H1 (cell line): ENCODE measurements at regions of chr17 and their contacts with region 1.

Region 1: GRCh38 chr17:73311781-73312641 is at the start of gene CDC42EP4:
- DNase-seq: peak in 1 of 2 experiments; percentile 96
- H3K4me3 ChIP-seq: peak within 1 kb of the TSS; percentile 78 to 92 (median 82)
- H3K27ac ChIP-seq: no peak within 1 kb of the TSS
- H3K4me1 ChIP-seq: peaks cover 2 to 24% (median 20%) of the 10 kb centered on the region in 4 experiments
- H3K27me3 ChIP-seq: peaks cover 0 to 10% (median 5%) of the 10 kb centered on the region in 4 experiments; a peak in 3 of 7 replicates
- CTCF ChIP-seq: no peak
- EP300 ChIP-seq: no peak
- POLR2A ChIP-seq: no peak
- RAD21 ChIP-seq: no peak
- total RNA-seq, gene CDC42EP4: 12.6 and 13.1 TPM in 2 replicates

Region 2: GRCh38 chr17:73083432-73083831 is 228.6 kb before region 1 on chr17:
- CTCF ChIA-PET with region 1: no interaction called
- POLR2A ChIA-PET with region 1: no interaction called
- DNase-seq: no peak
- H3K4me3 ChIP-seq: no peak overlapping the region
- H3K27ac ChIP-seq: no peak overlapping the region
- H3K4me1 ChIP-seq: no peaks in the 10 kb centered on the region
- H3K27me3 ChIP-seq: no peaks in the 10 kb centered on the region
- CTCF ChIP-seq: no peak
- EP300 ChIP-seq: no peak
- POLR2A ChIP-seq: no peak
- RAD21 ChIP-seq: no peak

Region 3: GRCh38 chr17:73142872-73143381 is 169.1 kb before region 1 on chr17:
- CTCF ChIA-PET with region 1: no interaction called
- POLR2A ChIA-PET with region 1: no interaction called
- DNase-seq: no peak
- H3K4me3 ChIP-seq: no peak overlapping the region
- H3K27ac ChIP-seq: no peak overlapping the region
- H3K4me1 ChIP-seq: no peaks in the 10 kb centered on the region
- H3K27me3 ChIP-seq: no peaks in the 10 kb centered on the region
- CTCF ChIP-seq: no peak
- EP300 ChIP-seq: no peak
- POLR2A ChIP-seq: no peak
- RAD21 ChIP-seq: no peak

Region 4: GRCh38 chr17:73255671-73256181 is 56.3 kb before region 1 on chr17:
- CTCF ChIA-PET with region 1: interaction called, 53 read pairs
- POLR2A ChIA-PET with region 1: interaction called, 6 read pairs
- DNase-seq: peak; percentile 46 to 93
- H3K4me3 ChIP-seq: no peak overlapping the region
- H3K27ac ChIP-seq: no peak overlapping the region
- H3K4me1 ChIP-seq: peaks cover 0 to 8% (median 4%) of the 10 kb centered on the region in 4 experiments; a peak in 3 of 7 replicates
- H3K27me3 ChIP-seq: peaks cover 0 to under 1% (median 0%) of the 10 kb centered on the region in 4 experiments; a peak in 1 of 7 replicates
- CTCF ChIP-seq: peak; percentile 94 to 99 (median 98)
- EP300 ChIP-seq: no peak; a peak in 1 of 3 replicates
- POLR2A ChIP-seq: no peak
- RAD21 ChIP-seq: peak; percentile 99 to 100

Region 5: DNA sequence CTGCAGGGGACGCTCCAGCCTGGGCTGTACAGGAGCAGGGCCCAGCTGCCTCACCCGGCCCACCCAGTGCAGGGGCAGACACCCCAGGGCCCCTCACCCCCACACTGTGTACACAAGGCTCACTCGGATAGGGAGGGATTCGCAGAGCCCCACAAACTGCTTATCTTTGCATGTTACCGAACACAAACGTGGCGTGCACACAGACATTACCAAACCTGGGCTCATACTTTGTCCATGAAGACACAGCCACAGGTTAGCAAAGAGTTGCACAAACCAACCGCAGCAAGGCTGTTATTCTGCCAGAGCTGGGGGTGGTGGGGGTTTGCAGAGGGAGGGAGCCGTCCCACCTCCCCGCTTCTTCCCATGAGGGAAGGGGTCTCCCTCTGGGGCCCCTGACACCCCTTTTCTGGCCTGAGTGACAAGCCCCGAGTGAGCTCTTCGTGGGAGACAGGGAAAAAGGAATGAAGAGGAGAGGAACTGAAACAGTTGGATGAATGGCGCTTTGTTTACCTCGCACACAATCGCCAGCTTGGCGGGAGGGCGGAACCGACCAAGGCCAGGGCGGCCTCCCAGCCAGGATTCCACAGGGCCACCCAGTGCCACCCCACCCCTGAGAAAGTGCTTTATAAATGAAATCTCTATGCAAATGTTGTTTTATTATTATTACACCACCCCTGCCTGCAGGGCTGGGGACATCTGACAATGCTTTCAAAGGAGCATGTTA is 49.9 kb before region 1 on chr17:
- CTCF ChIA-PET with region 1: interaction called, 12 read pairs
- POLR2A ChIA-PET with region 1: no interaction called
- DNase-seq: peak; percentile 19 to 63
- H3K4me3 ChIP-seq: peak overlapping the region in 1 of 4 experiments; percentile 25; a peak in 1 of 8 replicates
- H3K27ac ChIP-seq: 0 out of 2 replicates have a peak overlapping the region, but pooled peaks have one; percentile 3
- H3K4me1 ChIP-seq: peaks cover 5 to 18% (median 11%) of the 10 kb centered on the region in 4 experiments
- H3K27me3 ChIP-seq: peaks cover 0 to 10% (median 4%) of the 10 kb centered on the region in 4 experiments; a peak in 4 of 7 replicates
- CTCF ChIP-seq: no peak
- EP300 ChIP-seq: 0 out of 3 replicates have a peak, but pooled peaks of 1 of the 2 experiments have one; percentile 26
- POLR2A ChIP-seq: no peak
- RAD21 ChIP-seq: no peak

Region 6: GRCh38 chr17:73297934-73298861 is 13.8 kb before region 1 on chr17:
- CTCF ChIA-PET with region 1: interaction called, 39 read pairs
- POLR2A ChIA-PET with region 1: interaction called, 6 read pairs
- DNase-seq: no peak
- H3K4me3 ChIP-seq: no peak overlapping the region
- H3K27ac ChIP-seq: no peak overlapping the region
- H3K4me1 ChIP-seq: no peaks in the 10 kb centered on the region
- H3K27me3 ChIP-seq: no peaks in the 10 kb centered on the region
- CTCF ChIP-seq: no peak
- EP300 ChIP-seq: no peak
- POLR2A ChIP-seq: no peak
- RAD21 ChIP-seq: no peak

Region 7: DNA sequence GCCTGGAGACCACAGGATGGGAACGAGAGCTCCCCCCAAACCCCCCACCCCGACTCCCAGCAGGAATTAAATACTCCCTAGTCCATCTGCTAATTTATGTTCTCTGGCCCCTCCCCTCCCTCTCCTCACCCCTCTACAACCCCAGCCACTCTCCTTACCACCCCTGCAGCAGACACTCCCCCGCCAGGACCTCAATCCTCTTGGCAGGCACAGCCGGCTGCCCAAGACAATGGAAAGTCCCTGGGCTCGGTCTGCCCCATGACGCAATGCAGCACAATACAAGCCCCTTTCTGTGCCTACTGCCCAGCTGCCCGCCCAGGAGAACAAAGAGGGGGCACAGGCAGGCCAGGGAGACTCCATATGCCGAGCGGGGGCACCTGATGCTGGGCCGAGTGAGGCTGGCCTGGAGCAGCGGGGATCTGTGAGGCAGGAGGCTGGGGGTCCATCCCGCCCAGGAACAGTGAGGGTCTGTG is 30.1 kb after region 1 on chr17:
- CTCF ChIA-PET with region 1: interaction called, 53 read pairs
- POLR2A ChIA-PET with region 1: interaction called, 49 read pairs
- DNase-seq: peak; percentile 70 to 78
- H3K4me3 ChIP-seq: peak overlapping the region in 2 of 4 experiments; percentile 14 to 17; a peak in 3 of 8 replicates
- H3K27ac ChIP-seq: peak overlapping the region; percentile 82
- H3K4me1 ChIP-seq: peaks cover 10 to 33% (median 27%) of the 10 kb centered on the region in 4 experiments
- H3K27me3 ChIP-seq: no peaks in the 10 kb centered on the region
- CTCF ChIP-seq: no peak
- EP300 ChIP-seq: peak in 1 of 2 experiments; percentile 86; a peak in 1 of 3 replicates
- POLR2A ChIP-seq: peak in 1 of 2 experiments; percentile 46; a peak in 1 of 3 replicates
- RAD21 ChIP-seq: peak in 1 of 2 experiments; percentile 12; a peak in 1 of 4 replicates

Region 8: DNA sequence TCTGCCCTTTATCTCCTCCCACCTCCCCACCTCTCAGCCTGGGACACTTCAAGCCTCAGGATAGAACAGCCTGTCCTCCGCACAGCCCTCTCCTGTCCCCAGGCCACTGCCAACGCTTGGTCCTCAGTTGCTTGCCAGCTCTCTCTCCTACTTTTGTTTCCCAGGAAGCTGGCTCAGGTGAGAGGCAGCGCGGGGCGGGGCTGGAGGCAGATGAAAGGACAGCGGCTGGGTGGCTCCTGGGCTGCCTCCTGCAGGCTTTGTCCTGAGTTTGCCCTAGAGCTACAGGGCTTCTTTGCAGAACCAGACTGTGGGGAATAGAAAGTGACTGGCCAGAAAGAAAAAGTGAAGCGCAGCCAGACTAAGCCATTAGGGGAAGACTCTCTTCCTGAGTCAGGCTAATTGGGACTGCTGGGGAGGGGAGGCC is 48.0 kb after region 1 on chr17:
- CTCF ChIA-PET with region 1: interaction called, 18 read pairs
- POLR2A ChIA-PET with region 1: interaction called, 5 read pairs
- DNase-seq: peak; percentile 59 to 81
- H3K4me3 ChIP-seq: peak overlapping the region in 1 of 4 experiments; percentile 34; a peak in 3 of 8 replicates
- H3K27ac ChIP-seq: no peak overlapping the region
- H3K4me1 ChIP-seq: peaks cover 4 to 33% (median 26%) of the 10 kb centered on the region in 4 experiments
- H3K27me3 ChIP-seq: no peaks in the 10 kb centered on the region
- CTCF ChIP-seq: peak; percentile 33 to 42 (median 34)
- EP300 ChIP-seq: no peak
- POLR2A ChIP-seq: no peak
- RAD21 ChIP-seq: peak; percentile 23 to 58; a peak in 3 of 4 replicates

Region 9: DNA sequence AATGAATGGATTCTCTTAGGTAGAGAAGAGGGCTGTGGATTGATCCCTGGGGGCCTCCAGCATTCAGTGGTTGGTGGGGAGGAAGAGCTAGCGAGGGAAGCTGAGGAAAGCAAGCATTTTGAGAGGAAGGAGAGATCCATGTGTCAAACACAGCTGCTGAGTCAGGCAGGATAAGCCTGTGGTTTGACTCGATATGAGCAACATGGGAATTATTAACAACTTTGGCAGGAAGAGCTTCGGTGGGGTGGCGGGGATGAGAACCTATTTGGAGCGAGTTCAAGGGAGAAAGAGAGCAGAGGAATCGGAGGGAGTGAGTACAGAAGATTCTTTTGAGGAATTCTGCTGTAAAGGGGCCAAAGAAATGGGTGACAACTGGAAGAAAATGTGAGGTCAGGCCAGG is 59.3 kb after region 1 on chr17:
- CTCF ChIA-PET with region 1: interaction called, 52 read pairs
- POLR2A ChIA-PET with region 1: no interaction called
- DNase-seq: no peak
- H3K4me3 ChIP-seq: no peak overlapping the region
- H3K27ac ChIP-seq: no peak overlapping the region
- H3K4me1 ChIP-seq: peaks cover 0 to 7% (median 2%) of the 10 kb centered on the region in 4 experiments; a peak in 4 of 7 replicates
- H3K27me3 ChIP-seq: no peaks in the 10 kb centered on the region
- CTCF ChIP-seq: no peak
- EP300 ChIP-seq: no peak
- POLR2A ChIP-seq: no peak
- RAD21 ChIP-seq: no peak

Region 10: GRCh38 chr17:73446617-73447016 is 134.6 kb after region 1 on chr17:
- CTCF ChIA-PET with region 1: no interaction called
- POLR2A ChIA-PET with region 1: no interaction called
- DNase-seq: no peak
- H3K4me3 ChIP-seq: no peak overlapping the region
- H3K27ac ChIP-seq: no peak overlapping the region
- H3K4me1 ChIP-seq: no peaks in the 10 kb centered on the region
- H3K27me3 ChIP-seq: peaks cover 0 to 2% (median 0%) of the 10 kb centered on the region in 4 experiments; a peak in 1 of 7 replicates
- CTCF ChIP-seq: no peak
- EP300 ChIP-seq: no peak
- POLR2A ChIP-seq: no peak
- RAD21 ChIP-seq: no peak